Dorsolateral prefrontal cortex (tissue), 120 donors: ENCODE measurements at regions of chr3 and their contacts with region 1.

Region 1: DNA sequence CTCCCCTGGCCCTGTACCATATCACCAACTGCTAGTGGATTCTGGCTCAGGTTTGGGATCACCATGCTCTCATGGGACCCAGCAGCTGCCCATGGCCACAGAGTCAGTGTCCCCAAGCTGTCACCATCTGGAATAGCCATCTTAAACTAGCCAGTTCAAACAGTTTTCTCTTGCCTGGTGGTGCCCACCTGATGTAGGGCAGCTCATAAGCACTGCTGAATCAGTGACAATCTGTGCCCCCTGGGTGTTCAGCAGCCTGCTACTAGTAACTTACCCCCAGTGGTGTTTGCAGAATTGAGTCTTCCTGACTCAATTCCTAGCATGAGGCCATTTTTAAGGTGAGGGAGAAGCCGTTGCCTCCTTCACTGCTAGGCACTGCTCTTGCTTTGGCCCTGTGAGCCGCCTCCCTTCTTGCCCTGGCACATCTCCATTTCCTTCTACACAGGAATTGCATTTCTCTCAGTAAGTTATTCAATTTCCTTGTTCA is 7.9 kb downstream of the RPSA start:
- DNase-seq: no peak
- H3K4me3 ChIP-seq: no peak overlapping the region
- H3K27ac ChIP-seq: peak overlapping the region in 1 of 59 donors; percentile 23
- H3K27me3 ChIP-seq: no peaks in the 10 kb centered on the region
- CTCF ChIP-seq: no peak

Region 2: DNA sequence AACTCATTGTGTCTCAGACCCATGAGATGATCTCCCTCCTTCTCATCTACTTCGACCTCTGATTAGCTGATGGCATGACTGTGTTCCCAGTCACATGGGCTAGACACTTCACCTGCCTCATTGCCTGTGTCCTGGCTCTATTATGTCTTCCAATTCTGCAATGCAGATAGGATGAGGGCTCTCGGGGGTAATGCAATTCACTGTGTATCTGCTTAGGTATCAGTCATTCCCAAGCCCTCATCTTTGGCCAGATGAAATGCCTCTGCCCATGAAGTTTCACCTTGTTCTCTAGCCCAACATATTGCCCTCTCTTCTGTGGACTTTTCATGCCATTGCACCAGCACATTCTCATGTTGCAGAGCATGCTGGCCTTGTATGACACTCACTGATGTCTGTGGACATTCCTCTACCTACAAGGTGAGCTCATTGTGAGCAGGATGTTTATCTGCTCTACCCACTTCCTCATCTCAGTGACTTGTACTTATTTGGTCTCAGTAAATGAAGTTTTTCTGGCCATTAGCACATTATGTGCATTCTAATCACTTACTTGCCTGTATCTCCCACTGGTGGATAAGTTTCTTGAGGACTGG is 85.3 kb after region 1 on chr3:
- intact Hi-C with region 1: loop called (anchors 1 to 5 kb)
- DNase-seq: no peak
- H3K4me3 ChIP-seq: peak overlapping the region in 10 of 59 donors; percentile 3 to 64 (median 60)
- H3K27ac ChIP-seq: peak overlapping the region in 33 of 59 donors; percentile 18 to 97 (median 76)
- H3K27me3 ChIP-seq: peaks cover 0 to 11% (median 0%) of the 10 kb centered on the region in 45 donors
- CTCF ChIP-seq: no peak